ENCODE measurements at regions of chr14 and their contacts with region 1.

Region 1: DNA sequence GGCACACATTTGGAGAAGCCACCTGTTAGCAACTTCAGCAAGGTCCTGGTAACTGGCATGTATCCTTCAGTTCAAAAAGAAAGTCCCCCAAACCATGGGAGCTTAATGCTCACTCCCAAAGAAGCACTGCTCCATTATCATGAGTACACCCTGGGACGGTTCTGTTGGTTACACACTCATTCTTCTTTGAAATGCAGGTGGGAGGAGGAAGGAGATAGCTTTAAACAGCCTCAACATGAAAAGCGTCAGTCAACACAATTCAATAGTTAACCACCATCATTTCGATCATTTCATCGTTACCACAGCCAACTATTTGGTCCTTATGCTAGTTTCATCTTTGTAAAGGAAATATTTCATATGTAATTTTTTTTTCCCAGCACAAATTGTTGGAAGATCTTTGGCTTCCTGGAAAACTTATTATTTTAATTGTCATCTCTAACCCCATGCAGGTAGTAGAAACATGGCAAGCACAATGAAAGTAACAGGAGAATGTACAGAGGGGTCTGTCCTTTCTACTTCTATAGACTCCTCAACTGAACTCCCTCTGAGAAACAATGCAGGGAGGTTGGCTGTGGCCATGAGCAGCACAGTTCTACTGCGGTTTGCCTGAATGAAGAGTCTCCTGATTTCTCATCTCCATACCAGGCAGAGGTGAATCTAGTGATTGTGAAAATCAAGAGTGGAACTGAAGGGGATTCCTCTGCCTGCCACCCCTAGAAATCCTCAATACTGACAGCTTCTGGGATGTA is 196.4 kb upstream of the FOXN3 start:
- DNase-seq: no peak
- H3K4me3 Mint-ChIP-seq: peak overlapping the region; percentile 69
- H3K27ac Mint-ChIP-seq: peak overlapping the region; percentile 79
- H3K4me1 Mint-ChIP-seq: peaks cover 75% of the 10 kb centered on the region
- H3K27me3 Mint-ChIP-seq: no peaks in the 10 kb centered on the region

Region 2: DNA sequence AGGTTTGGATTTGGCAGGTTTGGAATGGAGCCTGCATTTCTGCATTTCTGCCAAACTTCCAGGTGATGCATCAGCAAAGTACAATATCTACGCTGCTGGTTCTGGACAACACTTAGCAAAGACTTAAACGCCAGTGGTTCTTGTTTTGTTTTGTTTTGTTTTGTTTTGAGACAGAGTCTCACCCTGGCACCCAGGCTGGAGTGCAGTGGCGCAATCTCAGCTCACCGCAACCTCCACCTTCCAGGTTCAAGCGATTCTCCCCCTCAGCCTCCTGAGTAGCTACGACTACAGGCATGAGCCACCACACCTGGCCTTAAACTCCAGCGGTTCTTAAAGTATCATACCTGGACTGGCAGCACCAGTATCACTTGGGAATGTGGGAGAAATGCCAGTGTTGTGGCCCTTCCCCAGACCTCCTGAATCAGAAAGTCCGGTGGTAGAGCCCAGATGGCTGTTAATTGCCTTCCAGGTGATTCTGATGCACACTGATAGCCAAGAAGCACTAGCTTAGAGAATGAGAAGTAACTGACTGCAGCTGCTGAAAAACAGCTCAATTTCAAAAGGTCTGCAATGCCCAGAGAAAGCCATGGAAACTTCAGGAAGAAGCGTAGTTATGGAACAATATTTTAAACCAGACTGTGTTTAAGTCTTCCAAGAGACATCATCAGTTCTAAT is 81.6 kb before region 1 on chr14:
- intact Hi-C with region 1: no loop called
- DNase-seq: no peak
- H3K4me3 Mint-ChIP-seq: no peak overlapping the region
- H3K27ac Mint-ChIP-seq: no peak overlapping the region
- H3K4me1 Mint-ChIP-seq: peaks cover 4% of the 10 kb centered on the region
- H3K27me3 Mint-ChIP-seq: no peaks in the 10 kb centered on the region

Region 3: DNA sequence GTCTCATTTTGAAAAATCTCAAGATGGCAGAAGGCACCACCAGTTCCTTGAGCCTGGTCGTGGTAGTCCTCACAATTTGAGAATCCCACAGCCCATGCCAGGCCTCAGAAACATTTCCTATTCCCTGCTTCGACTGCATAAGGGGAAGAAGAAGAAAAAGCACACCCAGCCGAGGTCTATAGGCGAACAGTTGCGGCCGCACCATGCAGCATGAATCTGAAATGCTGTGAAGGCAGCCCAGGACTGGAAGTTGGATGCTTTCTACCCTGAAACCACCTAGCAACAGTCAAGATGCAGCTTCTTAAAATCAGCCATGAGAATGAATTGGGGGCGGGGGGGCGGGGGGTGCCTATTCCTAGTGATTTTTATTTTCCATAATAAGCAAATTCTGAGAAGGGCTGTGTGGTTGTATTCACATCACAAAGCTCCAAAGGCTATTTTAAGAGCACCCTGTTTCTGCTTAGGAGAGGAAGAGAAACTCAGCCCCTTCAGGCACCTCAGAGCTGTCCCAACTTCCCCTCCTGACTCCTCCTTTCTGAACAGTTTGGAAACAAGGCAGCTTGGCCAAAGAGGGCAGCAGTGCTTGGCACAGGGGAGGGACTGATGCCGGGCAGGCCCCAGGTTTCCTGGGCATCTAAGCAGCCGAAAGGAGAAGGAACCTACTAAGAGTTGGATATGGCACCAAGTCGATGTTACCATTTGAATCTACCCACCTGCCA is 23.9 kb before region 1 on chr14:
- intact Hi-C with region 1: loop called (anchors 1 kb)
- DNase-seq: no peak
- H3K4me3 Mint-ChIP-seq: no peak overlapping the region
- H3K27ac Mint-ChIP-seq: peak overlapping the region; percentile 14
- H3K4me1 Mint-ChIP-seq: peaks cover 52% of the 10 kb centered on the region
- H3K27me3 Mint-ChIP-seq: no peaks in the 10 kb centered on the region